ENCODE measurements at regions of chr10 and their contacts with region 1.

Region 1: DNA sequence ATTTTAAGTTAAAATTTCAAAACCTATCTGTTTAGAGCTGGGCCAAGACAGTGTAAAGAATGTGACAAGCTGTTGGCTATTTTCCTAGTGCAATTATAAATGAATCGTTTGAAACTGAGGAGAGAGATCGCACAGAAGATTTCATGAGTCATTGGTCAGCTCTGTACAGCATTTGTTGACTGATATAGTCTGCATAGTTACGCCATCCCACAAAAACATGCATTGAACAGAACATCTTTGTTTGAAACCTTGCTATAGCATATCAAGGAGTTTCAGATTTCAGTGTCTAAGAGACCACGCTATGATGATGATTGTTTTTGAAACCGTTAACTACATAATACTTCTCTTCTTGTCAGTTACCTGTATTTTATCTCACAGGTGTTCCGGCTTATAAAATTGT is 1.3 kb upstream of the C10orf67 start:
- DNase-seq: no peak
- ATAC-seq: no peak
- H3K4me3 ChIP-seq: no peak overlapping the region
- H3K27ac ChIP-seq: no peak overlapping the region
- H3K4me1 ChIP-seq: no peaks in the 10 kb centered on the region
- H3K27me3 ChIP-seq: no peaks in the 10 kb centered on the region

Region 2: DNA sequence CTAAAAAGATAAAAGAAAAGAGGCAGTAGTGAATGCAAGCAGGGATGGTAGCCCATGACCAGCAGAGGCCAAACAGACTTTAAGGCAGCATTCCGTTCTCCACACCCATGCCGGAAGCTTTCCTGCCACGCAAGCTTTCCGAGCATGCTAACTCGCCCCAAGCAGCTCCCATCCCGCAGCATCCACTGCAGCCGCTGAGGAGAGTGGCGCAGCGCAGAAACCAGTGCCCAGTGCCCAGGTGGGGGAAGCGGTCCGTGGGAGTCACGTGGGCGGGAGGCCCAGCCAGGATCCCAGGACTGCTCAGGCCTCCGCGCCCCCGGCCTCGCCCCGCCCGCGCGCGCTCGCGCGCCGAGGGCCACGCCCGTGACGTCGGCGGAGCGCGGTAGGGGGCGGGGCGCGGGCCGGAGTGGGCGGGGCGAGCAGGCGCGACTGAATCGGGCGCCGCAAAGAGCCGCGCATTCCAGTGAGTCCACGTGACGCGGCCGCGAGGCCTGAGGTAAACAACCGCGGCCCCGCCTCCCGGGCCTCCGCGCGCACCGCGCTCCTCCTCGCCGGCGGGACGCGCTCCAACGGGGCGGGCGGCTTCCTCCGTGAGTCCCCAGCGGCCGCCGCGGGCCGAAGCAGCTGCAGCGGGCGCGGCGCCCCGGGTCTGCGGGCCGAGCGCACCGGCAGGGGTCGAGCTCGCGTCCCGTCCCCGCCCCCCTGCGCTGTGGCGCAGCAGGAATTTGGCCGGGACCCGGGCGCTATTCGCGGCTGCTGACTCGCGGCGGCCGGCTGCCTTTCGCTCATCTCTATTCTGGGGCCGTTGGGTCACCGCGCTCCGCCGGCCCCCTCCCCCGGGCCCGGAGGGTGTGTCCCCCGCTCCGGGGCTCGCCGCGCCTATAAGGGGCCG is 92.9 kb after region 1 on chr10 and contains the start of gene OTUD1:
- intact Hi-C with region 1: loop called in 1 of 4 experiments (anchors 5 kb)
- DNase-seq: peak; percentile 97 to 99 (median 99)
- ATAC-seq: peak; percentile 97
- H3K4me3 ChIP-seq: peak within 1 kb of the TSS; percentile 97
- H3K27ac ChIP-seq: peak within 1 kb of the TSS; percentile 98
- H3K4me1 ChIP-seq: no peaks in the 10 kb centered on the region
- H3K27me3 ChIP-seq: no peaks in the 10 kb centered on the region
- total RNA-seq, gene OTUD1: 13.5 to 17.8 (median 14.2) TPM

Measured in right cardiac atrium (tissue), 5 donors.